Activated CD8-positive, alpha-beta T cell treated with anti-CD3 and anti-CD28 coated beads for 36 hours (primary cell): ENCODE measurements at regions of chr6 and their contacts with region 1.

Region 1: GRCh38 chr6:42017021-42017643 is 33.2 kb upstream of the TAF8 start:
- DNase-seq: peak; percentile 74
- ATAC-seq: peak; percentile 66
- H3K4me3 Mint-ChIP-seq: peak overlapping the region; percentile 50
- H3K27ac Mint-ChIP-seq: peak overlapping the region; percentile 84
- H3K4me1 Mint-ChIP-seq: peaks cover 71% of the 10 kb centered on the region
- H3K27me3 Mint-ChIP-seq: no peaks in the 10 kb centered on the region
- CTCF ChIP-seq: no peak

Region 2: DNA sequence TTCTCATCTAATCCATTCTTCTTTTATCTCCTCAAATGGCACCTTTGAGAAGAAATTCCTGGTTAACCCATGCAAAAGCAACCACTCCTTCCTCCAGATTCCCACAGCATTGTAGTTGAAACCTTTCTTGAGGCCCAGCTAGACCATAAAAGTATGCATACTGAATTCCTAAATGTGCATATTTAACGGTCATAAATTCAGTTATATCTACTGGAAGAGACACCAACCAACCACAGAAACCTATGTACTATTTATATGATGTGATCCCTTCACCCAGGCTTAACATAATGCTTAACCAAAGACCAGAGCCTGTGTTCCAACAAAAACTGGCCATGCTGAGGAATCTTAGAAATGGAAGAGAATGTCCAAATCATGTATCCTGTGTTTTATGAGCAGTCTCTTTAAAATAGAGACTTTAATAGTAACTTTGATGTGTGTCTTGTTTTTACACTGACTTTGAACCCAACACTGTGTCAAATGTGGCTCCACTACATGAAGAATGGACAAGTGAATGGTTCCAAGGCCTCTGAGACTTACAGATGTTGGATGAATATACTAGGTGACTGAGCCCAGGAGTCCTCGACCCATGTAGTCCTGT is 21.8 kb after region 1 on chr6:
- CTCF ChIA-PET with region 1: interaction called, 23 read pairs
- POLR2A ChIA-PET with region 1: interaction called, 12 read pairs
- intact Hi-C with region 1: loop called (anchors 2 kb)
- DNase-seq: no peak
- ATAC-seq: no peak
- H3K4me3 Mint-ChIP-seq: peak overlapping the region; percentile 78
- H3K27ac Mint-ChIP-seq: peak overlapping the region; percentile 99
- H3K4me1 Mint-ChIP-seq: peaks cover 67% of the 10 kb centered on the region
- H3K27me3 Mint-ChIP-seq: no peaks in the 10 kb centered on the region
- CTCF ChIP-seq: no peak

Region 3: GRCh38 chr6:42104095-42104806 is 87.1 kb after region 1 on chr6:
- CTCF ChIA-PET with region 1: no interaction called
- POLR2A ChIA-PET with region 1: no interaction called
- intact Hi-C with region 1: no loop called
- DNase-seq: peak; percentile 86
- ATAC-seq: peak; percentile 76
- H3K4me3 Mint-ChIP-seq: peak overlapping the region; percentile 71
- H3K27ac Mint-ChIP-seq: peak overlapping the region; percentile 78
- H3K4me1 Mint-ChIP-seq: peaks cover 26% of the 10 kb centered on the region
- H3K27me3 Mint-ChIP-seq: no peaks in the 10 kb centered on the region
- CTCF ChIP-seq: peak; percentile 99

Region 4: DNA sequence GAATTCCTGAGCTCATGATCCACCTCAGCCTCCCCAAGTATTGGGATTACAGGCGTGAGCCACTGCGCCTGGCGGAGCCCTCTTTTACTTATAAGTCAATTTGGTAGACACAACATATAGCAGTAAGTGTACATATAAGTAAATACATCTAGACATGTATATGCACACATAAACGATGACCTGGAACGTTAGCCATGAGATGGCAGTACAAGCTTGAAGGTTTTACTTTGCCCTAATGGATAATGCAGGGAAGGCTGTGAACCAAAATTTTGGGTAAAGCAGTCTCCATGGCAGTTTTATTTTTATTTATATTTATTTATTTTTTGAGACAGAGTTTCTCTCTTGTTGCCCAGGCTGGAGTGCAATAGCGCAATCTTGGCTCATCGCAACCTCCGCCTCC is 941.0 kb after region 1 on chr6:
- CTCF ChIA-PET with region 1: no interaction called
- POLR2A ChIA-PET with region 1: no interaction called
- intact Hi-C with region 1: no loop called
- DNase-seq: no peak
- ATAC-seq: no peak
- H3K4me3 Mint-ChIP-seq: no peak overlapping the region
- H3K27ac Mint-ChIP-seq: no peak overlapping the region
- H3K4me1 Mint-ChIP-seq: peaks cover 8% of the 10 kb centered on the region
- H3K27me3 Mint-ChIP-seq: no peaks in the 10 kb centered on the region
- CTCF ChIP-seq: no peak